A673 (cell line): ENCODE measurements at regions of chr19 and their contacts with region 1.

Region 1: DNA sequence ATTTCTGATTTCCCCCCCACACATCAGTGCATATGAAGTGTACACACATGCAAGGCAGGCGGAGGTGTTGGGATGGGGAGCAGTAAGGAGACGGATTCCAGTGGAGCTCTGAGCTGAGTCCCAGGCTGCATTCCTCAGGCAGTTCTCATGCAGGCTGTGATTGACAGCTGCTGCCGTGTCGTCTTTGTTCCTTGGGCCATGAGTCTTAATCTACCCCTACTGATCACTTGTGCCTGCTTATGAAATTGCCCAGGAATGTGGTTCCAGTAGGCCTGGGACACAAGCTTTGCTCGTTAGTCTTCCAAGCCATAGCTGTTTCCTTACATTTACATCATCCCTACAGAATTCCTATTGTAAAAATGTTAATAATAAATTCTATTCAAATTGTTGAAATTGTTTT is 1241.9 kb downstream of the UQCRFS1 start:
- DNase-seq: peak; percentile 18
- H3K4me3 ChIP-seq: no peak overlapping the region
- H3K27ac ChIP-seq: no peak overlapping the region
- H3K4me1 ChIP-seq: no peaks in the 10 kb centered on the region
- H3K27me3 ChIP-seq: no peaks in the 10 kb centered on the region
- CTCF ChIP-seq: no peak

Region 2: GRCh38 chr19:27858981-27859581 is 112.0 kb before region 1 on chr19:
- CTCF ChIA-PET with region 1: no interaction called
- POLR2A ChIA-PET with region 1: no interaction called
- intact Hi-C with region 1: no loop called
- DNase-seq: no peak
- H3K4me3 ChIP-seq: no peak overlapping the region
- H3K27ac ChIP-seq: no peak overlapping the region
- H3K4me1 ChIP-seq: no peaks in the 10 kb centered on the region
- H3K27me3 ChIP-seq: no peaks in the 10 kb centered on the region
- CTCF ChIP-seq: no peak

Region 3: GRCh38 chr19:28324275-28325060 is 353.4 kb after region 1 on chr19:
- CTCF ChIA-PET with region 1: no interaction called
- POLR2A ChIA-PET with region 1: no interaction called
- intact Hi-C with region 1: loop called (anchors 2 kb)
- DNase-seq: no peak
- H3K4me3 ChIP-seq: no peak overlapping the region
- H3K27ac ChIP-seq: no peak overlapping the region
- H3K4me1 ChIP-seq: no peaks in the 10 kb centered on the region
- H3K27me3 ChIP-seq: no peaks in the 10 kb centered on the region
- CTCF ChIP-seq: no peak; the same call in 1 of the 2 replicates